K562 (cell line): ENCODE measurements at regions of chr16 and their contacts with region 1.

Region 1: DNA sequence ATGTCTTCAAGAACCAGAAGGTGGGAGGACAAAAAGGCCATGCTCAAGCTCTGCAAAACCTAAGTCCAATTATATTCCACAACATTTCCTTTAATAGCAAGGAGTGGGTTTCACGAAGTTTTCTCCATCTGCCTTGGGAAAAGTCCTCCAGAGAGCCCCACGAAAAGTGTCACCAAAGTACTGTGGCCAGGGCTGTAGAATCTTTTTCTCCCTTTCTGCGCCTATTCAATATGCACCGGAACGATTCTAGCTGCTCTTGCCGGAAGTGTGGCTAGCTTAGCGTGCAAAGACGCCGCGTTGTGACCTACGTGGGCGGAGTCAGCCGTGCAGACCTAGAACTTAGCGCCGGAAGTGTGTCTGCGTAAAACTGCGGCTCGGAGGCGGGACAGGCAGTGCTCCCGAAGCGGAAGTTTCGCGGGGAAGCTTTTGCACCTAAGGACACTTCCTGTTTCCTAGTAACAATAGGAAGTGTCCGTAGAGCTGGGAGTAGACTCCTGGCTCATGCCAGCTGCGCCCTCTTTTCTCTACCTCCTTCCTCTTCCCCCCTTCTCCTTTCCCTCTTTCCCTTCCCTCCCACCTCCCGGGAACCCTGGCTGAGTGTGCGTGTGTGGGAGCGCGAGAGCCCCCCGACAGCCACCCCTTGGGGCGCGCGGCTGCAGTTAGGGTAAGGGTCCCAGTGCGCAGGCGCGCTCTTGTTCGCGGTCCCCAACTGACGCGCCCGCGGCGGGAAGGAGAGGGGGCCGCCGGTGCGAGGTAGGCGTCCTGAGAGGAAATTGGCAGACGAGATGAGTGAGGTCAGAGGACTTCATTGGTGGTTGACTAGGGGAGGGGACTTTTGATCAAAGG is at the starts of genes ZNF646 and ZNF668:
- DNase-seq: peak; percentile 92 to 99 (median 94)
- ATAC-seq: peak; percentile 91
- H3K4me3 ChIP-seq: peak within 1 kb of the TSS; percentile 79
- H3K27ac ChIP-seq: peak within 1 kb of the TSS; percentile 88
- H3K4me1 ChIP-seq: peaks cover 11 to 34% of the 10 kb centered on the region in 2 experiments; a peak in 4 of 5 replicates
- H3K27me3 ChIP-seq: no peaks in the 10 kb centered on the region
- CTCF ChIP-seq: no peak
- EP300 ChIP-seq: peak; percentile 45
- POLR2A ChIP-seq: peak; percentile 97
- RAD21 ChIP-seq: no peak
- polyA plus RNA-seq, gene ZNF646: 0.08 to 0.10 TPM
- polyA plus RNA-seq, gene ZNF668: 0.04 TPM in 1 of 2 experiments, not detected in the other

Region 2: DNA sequence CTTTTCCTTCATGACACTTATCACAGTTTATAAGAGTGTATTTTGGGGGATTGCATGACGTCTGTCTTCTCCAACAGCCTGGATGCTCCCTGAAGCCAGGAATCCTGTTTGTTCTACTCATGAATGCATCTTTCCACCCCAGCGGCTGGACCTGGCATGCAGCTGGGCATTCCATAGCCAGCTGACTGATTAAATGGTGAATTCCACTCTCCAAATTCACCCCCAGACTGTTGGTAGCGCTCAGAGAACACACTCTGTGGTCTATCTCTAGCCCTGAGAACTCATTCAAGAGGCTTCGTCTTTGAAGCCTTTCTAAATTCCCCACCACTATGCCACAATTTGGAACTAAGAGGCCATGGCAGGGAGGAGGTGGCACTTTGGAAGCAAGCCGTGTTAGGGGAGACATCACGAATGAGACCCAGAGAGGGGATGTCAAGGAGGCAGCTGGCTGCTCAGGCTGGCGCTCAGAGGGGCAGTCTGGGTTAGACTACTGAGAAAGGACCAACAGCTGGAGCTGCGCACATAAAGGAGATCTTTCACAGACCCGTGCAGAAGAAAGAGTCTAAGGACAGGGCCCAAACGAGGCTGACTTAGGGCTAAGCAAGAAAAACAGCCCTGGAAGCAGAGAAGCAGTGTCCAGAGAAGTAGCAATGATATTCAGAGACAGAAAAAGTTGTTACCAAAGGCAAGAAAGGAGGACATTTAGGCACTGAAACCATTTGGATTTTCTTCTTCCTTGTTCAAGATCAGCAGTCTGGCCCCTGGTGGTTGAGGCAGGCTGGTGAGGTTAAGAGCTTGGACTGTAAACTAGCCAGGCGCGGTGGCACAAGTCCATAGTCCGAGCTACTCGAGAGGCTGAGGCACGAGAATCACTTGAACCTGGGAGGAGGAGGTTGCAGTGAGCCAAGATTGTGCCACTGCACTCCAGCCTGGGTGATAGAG is 244.8 kb before region 1 on chr16:
- CTCF ChIA-PET with region 1: no interaction called
- POLR2A ChIA-PET with region 1: no interaction called
- in situ Hi-C with region 1: no loop called
- intact Hi-C with region 1: no loop called
- DNase-seq: peak in 1 of 4 experiments; percentile 22
- ATAC-seq: peak; percentile 68
- H3K4me3 ChIP-seq: no peak overlapping the region
- H3K27ac ChIP-seq: no peak overlapping the region
- H3K4me1 ChIP-seq: peaks cover 0 to 5% of the 10 kb centered on the region in 2 experiments; a peak in 1 of 5 replicates
- H3K27me3 ChIP-seq: no peaks in the 10 kb centered on the region
- CTCF ChIP-seq: peak in 2 of 3 experiments; percentile 15 to 18; a peak in 1 of 6 replicates
- EP300 ChIP-seq: no peak
- POLR2A ChIP-seq: no peak
- RAD21 ChIP-seq: no peak

Region 3: DNA sequence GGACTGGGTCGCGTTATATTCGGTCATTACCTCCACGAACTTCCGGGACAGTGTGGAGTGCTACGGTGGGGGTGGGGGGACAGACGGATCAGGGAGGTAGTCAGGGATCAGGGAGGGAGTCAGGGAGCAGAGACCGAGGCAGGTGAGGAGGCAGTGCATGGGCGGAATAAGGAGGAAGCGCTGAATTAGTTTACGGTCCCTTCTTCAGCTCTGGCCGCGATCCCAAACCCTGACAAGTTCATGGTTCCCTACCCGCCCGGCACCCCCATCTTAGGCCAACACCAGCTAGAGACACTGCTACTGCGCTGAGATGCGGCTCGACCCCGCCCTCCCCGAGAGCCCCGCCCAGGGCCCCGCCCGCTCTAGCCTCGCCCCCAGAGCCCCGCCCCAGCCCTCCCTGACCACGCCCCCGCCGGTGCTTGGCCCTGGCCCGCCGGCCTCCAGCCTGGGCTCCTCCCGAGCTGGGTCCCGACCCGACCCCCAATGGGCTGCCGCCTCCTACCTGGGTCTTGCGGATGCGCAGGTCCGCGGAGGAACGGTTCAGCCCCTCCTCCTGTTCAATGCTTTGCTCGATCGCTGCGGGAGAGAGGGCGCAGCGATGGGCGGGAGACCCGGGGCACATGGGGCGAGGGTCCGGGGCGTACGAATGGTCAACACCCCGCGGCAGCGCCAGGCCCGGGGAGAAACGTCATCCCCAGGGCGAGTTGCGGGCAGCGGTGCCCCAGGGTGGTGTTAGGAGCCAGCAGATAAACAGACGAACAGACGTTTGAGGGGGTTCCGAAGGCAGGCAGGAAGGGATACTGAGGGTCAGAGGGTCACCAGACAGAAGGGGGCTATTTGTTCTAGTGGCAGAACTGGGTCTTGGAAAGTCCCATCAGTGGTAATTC is 76.9 kb before region 1 on chr16:
- CTCF ChIA-PET with region 1: no interaction called
- POLR2A ChIA-PET with region 1: interaction called, 7 read pairs
- in situ Hi-C with region 1: no loop called
- intact Hi-C with region 1: loop called (anchors 5 kb)
- DNase-seq: peak; percentile 89 to 99 (median 98)
- ATAC-seq: peak; percentile 93
- H3K4me3 ChIP-seq: peak overlapping the region; percentile 69
- H3K27ac ChIP-seq: peak overlapping the region; percentile 91
- H3K4me1 ChIP-seq: peaks cover 48 to 50% of the 10 kb centered on the region in 2 experiments
- H3K27me3 ChIP-seq: no peaks in the 10 kb centered on the region
- CTCF ChIP-seq: no peak
- EP300 ChIP-seq: no peak
- POLR2A ChIP-seq: peak; percentile 90
- RAD21 ChIP-seq: no peak

Region 4: GRCh38 chr16:31032736-31033708 is 41.2 kb before region 1 on chr16 and contains the start of gene STX4:
- CTCF ChIA-PET with region 1: no interaction called
- POLR2A ChIA-PET with region 1: interaction called, 6 read pairs
- in situ Hi-C with region 1: no loop called
- intact Hi-C with region 1: loop called (anchors 1 kb)
- DNase-seq: peak; percentile 91 to 99 (median 96)
- ATAC-seq: peak; percentile 88
- H3K4me3 ChIP-seq: peak within 1 kb of the TSS; percentile 98
- H3K27ac ChIP-seq: peak within 1 kb of the TSS; percentile 91
- H3K4me1 ChIP-seq: peaks cover 16 to 20% of the 10 kb centered on the region in 2 experiments
- H3K27me3 ChIP-seq: no peaks in the 10 kb centered on the region
- CTCF ChIP-seq: no peak; a peak in 1 of 6 replicates
- EP300 ChIP-seq: peak; percentile 81
- POLR2A ChIP-seq: peak; percentile 68
- RAD21 ChIP-seq: 0 out of 4 replicates have a peak, but pooled peaks of 1 of the 2 experiments have one; percentile 2
- polyA plus RNA-seq, gene STX4: 3.2 to 7.4 TPM

Region 5: GRCh38 chr16:31084616-31085260 is 10.5 kb after region 1 on chr16:
- CTCF ChIA-PET with region 1: no interaction called
- POLR2A ChIA-PET with region 1: interaction called, 32 read pairs
- in situ Hi-C with region 1: no loop called
- intact Hi-C with region 1: no loop called
- DNase-seq: no peak
- ATAC-seq: no peak
- H3K4me3 ChIP-seq: no peak overlapping the region
- H3K27ac ChIP-seq: no peak overlapping the region
- H3K4me1 ChIP-seq: peaks cover 0 to 74% of the 10 kb centered on the region in 2 experiments; a peak in 3 of 5 replicates
- H3K27me3 ChIP-seq: no peaks in the 10 kb centered on the region
- CTCF ChIP-seq: no peak
- EP300 ChIP-seq: no peak
- POLR2A ChIP-seq: no peak; the same call in 1 of the 2 replicates
- RAD21 ChIP-seq: no peak

Region 6: GRCh38 chr16:31094424-31095120 is 20.4 kb after region 1 on chr16 and contains the start of gene VKORC1:
- CTCF ChIA-PET with region 1: interaction called, 3 read pairs
- POLR2A ChIA-PET with region 1: interaction called, 16 read pairs
- in situ Hi-C with region 1: no loop called
- intact Hi-C with region 1: no loop called
- DNase-seq: peak; percentile 91 to 98 (median 93)
- ATAC-seq: peak; percentile 96
- H3K4me3 ChIP-seq: peak within 1 kb of the TSS; percentile 79
- H3K27ac ChIP-seq: peak within 1 kb of the TSS; percentile 70
- H3K4me1 ChIP-seq: peaks cover 17 to 32% of the 10 kb centered on the region in 2 experiments; a peak in 4 of 5 replicates
- H3K27me3 ChIP-seq: no peaks in the 10 kb centered on the region
- CTCF ChIP-seq: no peak
- EP300 ChIP-seq: no peak
- POLR2A ChIP-seq: peak; percentile 77
- RAD21 ChIP-seq: no peak
- polyA plus RNA-seq, gene VKORC1: 30.0 to 47.3 TPM

Region 7: DNA sequence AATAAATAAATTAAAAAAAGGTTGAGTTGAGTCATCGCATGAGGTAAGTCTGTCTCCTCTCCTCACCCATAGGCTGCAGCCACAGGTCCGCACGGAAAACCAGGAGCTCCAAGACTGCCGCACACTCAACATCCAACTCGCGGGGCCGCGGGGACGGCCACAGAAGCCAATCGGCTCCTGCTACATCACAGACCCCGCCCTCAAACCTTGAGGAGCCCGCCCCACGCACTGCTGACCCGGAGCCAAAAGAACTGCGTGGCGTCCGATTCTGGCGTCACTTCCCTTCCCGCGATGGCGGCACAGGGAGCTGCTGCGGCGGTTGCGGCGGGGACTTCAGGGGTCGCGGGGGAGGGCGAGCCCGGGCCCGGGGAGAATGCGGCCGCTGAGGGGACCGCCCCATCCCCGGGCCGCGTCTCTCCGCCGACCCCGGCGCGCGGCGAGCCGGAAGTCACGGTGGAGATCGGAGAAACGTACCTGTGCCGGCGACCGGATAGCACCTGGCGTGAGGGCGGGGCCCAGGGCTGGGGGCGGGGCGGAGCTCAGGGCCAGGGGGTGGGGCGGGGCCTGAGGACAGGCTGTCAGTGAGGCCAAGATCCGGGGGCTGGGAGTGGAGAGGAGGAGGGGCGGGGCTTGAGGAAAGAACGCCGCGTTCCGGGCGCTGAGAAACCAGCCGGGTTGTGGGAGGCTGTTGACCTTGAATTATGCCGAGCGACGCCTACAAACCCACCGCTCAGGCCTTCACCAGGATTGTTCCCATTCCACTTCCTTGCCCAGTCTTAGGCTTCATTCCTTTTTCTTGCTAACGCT is 43.4 kb after region 1 on chr16 and contains the start of gene KAT8:
- CTCF ChIA-PET with region 1: no interaction called
- POLR2A ChIA-PET with region 1: interaction called, 10 read pairs
- in situ Hi-C with region 1: no loop called
- intact Hi-C with region 1: no loop called
- DNase-seq: peak; percentile 98 to 99 (median 98)
- ATAC-seq: peak; percentile 95
- H3K4me3 ChIP-seq: peak within 1 kb of the TSS; percentile 68
- H3K27ac ChIP-seq: peak within 1 kb of the TSS; percentile 91
- H3K4me1 ChIP-seq: peaks cover 2 to 19% of the 10 kb centered on the region in 2 experiments; a peak in 4 of 5 replicates
- H3K27me3 ChIP-seq: no peaks in the 10 kb centered on the region
- CTCF ChIP-seq: no peak
- EP300 ChIP-seq: peak; percentile 50
- POLR2A ChIP-seq: peak; percentile 95
- RAD21 ChIP-seq: no peak; a peak in 1 of 4 replicates
- polyA plus RNA-seq, gene KAT8: 10.0 to 12.3 TPM

Region 8: GRCh38 chr16:31142109-31143010 is 68.2 kb after region 1 on chr16:
- CTCF ChIA-PET with region 1: no interaction called
- POLR2A ChIA-PET with region 1: interaction called, 4 read pairs
- in situ Hi-C with region 1: no loop called
- intact Hi-C with region 1: loop called (anchors 2 kb)
- DNase-seq: peak; percentile 99 to 100 (median 100)
- ATAC-seq: peak; percentile 97
- H3K4me3 ChIP-seq: peak overlapping the region; percentile 28
- H3K27ac ChIP-seq: peak overlapping the region; percentile 67
- H3K4me1 ChIP-seq: peaks cover 14 to 43% of the 10 kb centered on the region in 2 experiments
- H3K27me3 ChIP-seq: peaks cover 13 to 19% of the 10 kb centered on the region in 2 experiments; a peak in 4 of 5 replicates
- CTCF ChIP-seq: peak; percentile 89 to 95 (median 93)
- EP300 ChIP-seq: no peak
- POLR2A ChIP-seq: peak; percentile 65
- RAD21 ChIP-seq: peak; percentile 91 to 94